Activated CD4-positive, alpha-beta T cell treated with anti-CD3 and anti-CD28 coated beads, Interleukin-2, amount 10 ng/mL, durations not matched to agents 24 days and 14 days (primary cell): ENCODE measurements at regions of chr13 and their contacts with region 1.

Region 1: DNA sequence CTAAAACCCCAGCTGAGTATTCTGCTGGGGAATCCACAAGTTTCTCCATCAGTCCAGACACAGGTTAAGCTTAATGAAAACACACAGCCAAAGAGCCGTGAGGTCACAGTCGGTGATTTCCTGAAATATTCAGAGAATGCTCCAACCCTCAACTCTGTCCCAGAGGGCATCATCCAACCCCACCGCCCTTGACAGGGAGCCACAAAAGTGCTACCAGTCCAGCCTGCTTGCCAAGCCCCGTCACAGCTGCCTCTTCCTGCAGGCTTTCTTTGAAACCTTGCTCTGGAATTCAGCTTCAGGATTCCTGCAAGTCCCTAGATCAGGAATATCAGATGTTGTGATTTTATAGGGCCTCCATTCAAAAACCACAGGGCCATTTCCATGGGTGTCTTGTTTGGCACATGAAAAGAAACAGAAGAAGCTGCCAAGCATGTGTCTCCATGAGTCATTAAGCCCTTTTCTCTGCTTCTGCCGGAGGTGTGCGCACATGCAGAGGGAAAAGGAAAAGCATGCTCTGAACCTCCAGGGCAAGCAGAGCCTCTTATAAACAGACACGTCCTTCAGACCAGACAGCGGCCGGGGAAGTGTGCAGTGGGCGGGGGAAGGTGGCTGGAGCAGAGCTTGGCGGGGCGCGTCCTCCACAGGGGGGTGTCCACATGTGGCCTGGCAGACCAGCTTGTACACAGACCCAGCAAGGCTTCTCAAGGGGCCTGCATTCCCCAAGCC is 164.7 kb downstream of the KATNAL1 start:
- DNase-seq: peak; percentile 78
- H3K4me3 Mint-ChIP-seq: peak overlapping the region; percentile 37
- H3K27ac Mint-ChIP-seq: peak overlapping the region; percentile 93
- H3K4me1 Mint-ChIP-seq: peaks cover 54% of the 10 kb centered on the region
- H3K27me3 Mint-ChIP-seq: peaks cover 2% of the 10 kb centered on the region

Region 2: DNA sequence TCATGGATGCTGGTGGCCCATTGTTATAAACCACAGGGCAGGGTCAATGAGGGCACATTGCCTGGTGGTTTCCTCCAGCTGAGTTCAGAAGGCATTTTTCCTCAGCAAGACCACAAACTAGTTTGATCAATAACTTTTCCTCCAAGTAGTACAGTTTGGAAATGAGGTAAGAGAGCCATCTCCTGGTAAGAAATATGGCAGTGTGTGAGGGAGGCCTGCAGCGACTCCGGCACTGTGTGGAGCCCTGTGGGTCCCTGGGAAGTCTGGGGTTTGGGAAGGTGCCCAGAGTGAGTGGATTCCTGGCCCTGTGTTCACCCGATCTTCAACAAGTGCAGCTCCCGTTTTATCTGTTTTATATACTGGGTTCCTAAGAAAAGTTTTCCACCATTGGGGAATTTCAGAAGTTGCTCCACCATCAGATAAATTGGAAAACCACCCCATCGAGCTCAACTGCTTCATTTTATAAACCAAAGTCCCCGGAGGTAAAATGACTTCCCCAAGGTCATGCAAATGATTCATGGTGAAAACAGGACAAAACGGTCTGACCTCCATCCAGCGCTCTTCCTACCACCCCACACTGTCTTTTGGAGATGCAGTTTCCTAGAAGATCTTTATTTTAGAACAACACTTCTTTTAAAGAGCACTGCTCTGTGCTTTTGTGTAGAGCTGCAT is 16.3 kb after region 1 on chr13:
- intact Hi-C with region 1: loop called (anchors 1 kb)
- DNase-seq: peak; percentile 75
- H3K4me3 Mint-ChIP-seq: peak overlapping the region; percentile 77
- H3K27ac Mint-ChIP-seq: peak overlapping the region; percentile 91
- H3K4me1 Mint-ChIP-seq: peaks cover 42% of the 10 kb centered on the region
- H3K27me3 Mint-ChIP-seq: peaks cover 2% of the 10 kb centered on the region

Region 3: DNA sequence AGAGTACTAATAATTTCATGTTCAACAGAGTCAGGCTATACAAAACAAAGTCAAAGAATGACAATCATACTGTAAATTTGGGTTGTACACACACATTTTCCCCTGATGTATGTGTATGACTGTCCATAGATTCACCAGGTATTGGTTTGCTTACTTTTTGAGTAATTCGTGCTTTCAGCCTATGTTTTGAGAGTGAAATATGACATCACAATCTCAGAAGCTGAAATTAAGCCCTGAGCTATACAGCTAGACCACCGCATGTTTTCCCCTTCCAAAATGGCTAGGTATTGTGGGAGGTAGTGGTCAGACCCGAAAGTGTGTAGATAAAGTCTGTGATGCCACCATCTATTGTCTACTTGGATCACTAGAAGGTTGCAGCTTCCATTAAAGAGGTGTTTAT is 61.9 kb after region 1 on chr13:
- intact Hi-C with region 1: no loop called
- DNase-seq: no peak
- H3K4me3 Mint-ChIP-seq: no peak overlapping the region
- H3K27ac Mint-ChIP-seq: no peak overlapping the region
- H3K4me1 Mint-ChIP-seq: no peaks in the 10 kb centered on the region
- H3K27me3 Mint-ChIP-seq: no peaks in the 10 kb centered on the region

Region 4: GRCh38 chr13:30257468-30258099 is 114.9 kb after region 1 on chr13:
- intact Hi-C with region 1: loop called (anchors 10 kb)
- DNase-seq: no peak
- H3K4me3 Mint-ChIP-seq: no peak overlapping the region
- H3K27ac Mint-ChIP-seq: no peak overlapping the region
- H3K4me1 Mint-ChIP-seq: peaks cover 15% of the 10 kb centered on the region
- H3K27me3 Mint-ChIP-seq: no peaks in the 10 kb centered on the region